ENCODE measurements at regions of chr10 and their contacts with region 1.

Region 1: DNA sequence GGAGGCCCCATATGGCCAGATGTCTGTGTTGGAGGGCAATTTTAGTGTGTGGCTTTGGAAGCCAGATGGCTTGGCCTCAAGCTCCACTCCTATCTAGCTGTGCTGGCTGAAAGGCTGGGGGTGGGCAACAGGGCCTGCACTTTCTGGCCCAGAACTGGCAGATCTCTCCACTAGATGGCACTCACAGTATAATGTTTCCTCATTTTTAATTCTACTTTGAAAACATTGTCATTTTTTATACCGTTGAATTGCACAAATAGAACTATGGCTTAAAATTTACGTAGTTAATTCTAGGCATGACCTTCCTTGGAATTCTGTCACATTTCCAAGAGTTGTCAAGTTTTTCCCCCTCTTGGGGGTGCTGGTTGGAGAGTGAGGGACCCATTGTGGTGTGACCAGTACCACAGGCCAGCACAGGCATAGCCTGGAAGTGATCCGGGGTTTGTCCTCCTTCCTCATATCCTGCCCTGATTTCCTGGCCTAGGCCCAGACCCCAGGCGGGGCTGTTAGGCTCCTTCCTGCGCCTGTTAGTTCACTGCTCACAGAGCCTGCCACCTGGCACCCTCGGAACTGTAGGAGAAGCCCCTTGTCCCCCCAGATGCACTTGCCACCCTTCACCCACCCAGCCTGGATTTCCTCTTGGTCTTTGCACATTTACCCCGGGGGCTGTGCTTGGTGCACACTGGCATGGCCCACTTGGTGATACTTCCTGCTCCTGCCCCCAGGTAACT is 52.8 kb downstream of the ARHGAP22 start:
- DNase-seq: peak; percentile 53
- H3K4me3 Mint-ChIP-seq: no peak overlapping the region
- H3K27ac Mint-ChIP-seq: no peak overlapping the region
- H3K4me1 Mint-ChIP-seq: no peaks in the 10 kb centered on the region
- H3K27me3 Mint-ChIP-seq: no peaks in the 10 kb centered on the region
- CTCF ChIP-seq: peak; percentile 70

Region 2: DNA sequence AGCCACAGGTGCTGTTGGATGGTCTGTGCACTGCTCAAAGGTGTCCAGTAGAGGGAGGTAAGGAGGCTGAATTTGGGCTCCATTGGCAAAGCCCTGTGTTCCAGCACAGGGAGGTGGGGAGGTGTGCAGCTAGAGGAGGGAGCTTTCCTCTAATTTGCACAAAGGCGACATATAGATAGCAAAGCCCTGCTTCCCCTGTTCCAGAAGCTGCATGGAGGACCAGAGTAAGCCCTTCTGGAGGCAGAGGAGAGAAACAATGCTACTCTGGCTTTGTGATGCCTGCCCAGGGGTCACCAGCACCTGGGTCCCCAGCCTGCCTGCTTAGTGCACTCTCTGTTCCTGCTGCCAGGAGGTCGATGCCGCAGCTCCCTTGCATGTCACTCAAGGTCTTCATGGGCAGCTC is 56.3 kb after region 1 on chr10:
- CTCF ChIA-PET with region 1: interaction called, 16 read pairs
- POLR2A ChIA-PET with region 1: no interaction called
- intact Hi-C with region 1: loop called (anchors 2 kb)
- DNase-seq: peak; percentile 75
- H3K4me3 Mint-ChIP-seq: no peak overlapping the region
- H3K27ac Mint-ChIP-seq: no peak overlapping the region
- H3K4me1 Mint-ChIP-seq: peaks cover 26% of the 10 kb centered on the region
- H3K27me3 Mint-ChIP-seq: no peaks in the 10 kb centered on the region
- CTCF ChIP-seq: peak; percentile 70

Region 3: DNA sequence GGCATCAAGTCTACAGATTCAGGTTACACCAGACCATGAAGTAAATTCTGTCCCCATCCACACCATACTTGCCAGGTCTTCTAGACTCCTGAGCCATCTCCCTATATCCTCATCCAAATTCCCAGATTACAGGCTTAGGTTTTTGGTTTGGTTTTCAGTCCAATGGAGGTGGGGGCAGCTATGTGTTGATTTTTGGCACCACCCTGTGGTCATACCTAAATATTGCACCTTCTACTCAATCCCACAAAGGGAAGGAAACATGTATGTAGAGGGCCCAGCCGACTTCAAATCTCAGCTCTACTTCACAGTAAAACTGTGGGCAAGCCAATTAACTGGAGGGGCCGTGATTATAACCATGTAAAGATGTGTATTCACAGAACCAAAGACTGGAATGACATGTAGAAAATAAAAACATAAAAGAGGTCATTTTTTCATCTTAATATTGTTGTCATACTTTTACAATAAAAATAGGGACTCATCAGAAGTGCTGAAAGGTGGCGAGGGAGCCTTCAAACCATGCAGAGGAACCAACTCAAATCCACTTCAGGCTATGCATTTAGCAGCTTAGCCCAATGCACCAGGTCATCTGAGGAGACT is 967.1 kb after region 1 on chr10:
- CTCF ChIA-PET with region 1: interaction called, 3 read pairs
- POLR2A ChIA-PET with region 1: no interaction called
- intact Hi-C with region 1: loop called (anchors 5 kb)
- DNase-seq: peak; percentile 60
- H3K4me3 Mint-ChIP-seq: no peak overlapping the region
- H3K27ac Mint-ChIP-seq: no peak overlapping the region
- H3K4me1 Mint-ChIP-seq: peaks cover 5% of the 10 kb centered on the region
- H3K27me3 Mint-ChIP-seq: no peaks in the 10 kb centered on the region
- CTCF ChIP-seq: peak; percentile 66